Psoas muscle (tissue), 8 donors: ENCODE measurements at regions of chr9 and their contacts with region 1.

Region 1: DNA sequence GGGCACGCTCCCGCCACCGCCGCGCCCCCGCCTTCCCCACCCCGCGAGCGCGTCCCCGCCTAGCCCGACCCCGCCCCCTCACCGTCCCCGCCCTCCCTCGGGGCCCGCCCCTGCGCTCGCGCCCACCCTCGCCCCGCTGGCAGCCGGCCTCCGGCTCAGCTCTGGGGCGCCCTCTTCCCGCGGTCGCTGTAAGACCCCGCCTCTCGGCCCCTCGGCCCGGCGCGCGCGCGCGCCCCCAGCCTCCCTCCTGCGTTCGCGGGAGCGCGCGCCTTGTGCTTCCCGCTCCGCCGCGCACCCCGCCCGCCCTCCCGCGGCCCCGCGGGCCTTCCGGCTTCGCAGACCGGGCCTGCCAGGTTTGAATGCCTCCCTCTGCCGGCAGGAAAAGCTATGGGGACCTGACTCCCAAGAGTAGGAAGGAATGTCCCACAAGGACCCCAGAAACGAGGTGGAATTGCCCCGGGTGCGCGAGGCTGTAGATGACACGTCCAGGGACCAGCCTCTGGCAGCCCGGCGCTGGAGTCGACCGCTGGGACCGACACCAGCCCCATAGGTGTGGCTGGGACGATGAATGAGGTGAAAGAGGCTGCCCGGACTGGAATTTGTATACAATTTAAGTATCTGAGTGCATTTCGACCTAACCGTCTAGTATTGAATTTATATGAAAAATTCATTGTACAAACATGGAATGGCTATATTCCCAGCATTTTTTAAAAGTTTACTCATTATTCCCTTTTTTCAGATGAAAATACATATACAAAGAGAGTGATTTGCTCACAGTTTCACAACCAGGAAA is 416 bp upstream of the PTBP3 start:
- DNase-seq: peak; percentile 96 to 97
- ATAC-seq: peak; percentile 92 to 96 (median 93)
- H3K4me3 ChIP-seq: peak overlapping the region; percentile 76
- H3K27ac ChIP-seq: peak overlapping the region; percentile 94
- H3K4me1 ChIP-seq: peaks cover 21% of the 10 kb centered on the region
- H3K27me3 ChIP-seq: no peaks in the 10 kb centered on the region
- CTCF ChIP-seq: peak; percentile 61

Region 2: DNA sequence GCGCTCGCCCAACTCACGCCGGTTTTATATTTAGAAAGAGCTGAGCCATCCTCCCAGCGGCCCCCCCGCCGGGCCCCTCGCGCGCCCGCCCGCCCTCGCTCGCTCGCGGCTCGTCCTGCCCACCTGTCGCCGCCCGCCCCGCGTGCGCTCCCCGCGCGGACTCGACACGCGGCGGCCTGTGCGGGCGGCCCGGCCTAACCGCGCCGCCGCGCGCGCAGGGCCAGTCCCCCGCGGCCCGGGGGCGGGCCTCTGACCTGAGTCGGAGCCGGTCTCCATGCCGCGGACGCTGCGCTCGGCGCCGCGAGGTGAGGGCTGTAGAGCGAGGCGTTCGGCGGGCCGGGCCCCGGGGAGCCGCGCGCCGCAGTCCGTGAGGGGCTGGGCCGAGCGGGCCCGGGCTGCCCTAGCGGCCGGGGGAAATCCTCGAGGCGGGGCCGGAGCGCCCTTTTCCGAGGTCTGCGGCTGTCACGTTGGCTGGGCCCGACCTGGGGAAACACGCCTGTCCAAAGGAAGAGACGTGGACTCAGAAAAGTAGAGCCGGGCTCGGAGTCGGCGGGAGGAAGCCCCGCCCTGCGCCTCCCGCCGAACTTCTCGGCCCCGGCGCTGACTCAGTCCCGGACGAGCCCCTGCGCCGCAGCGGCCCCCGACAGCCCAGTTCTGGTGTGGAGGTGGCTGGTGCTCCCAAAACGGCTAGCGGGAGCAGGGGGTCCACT is 849.8 kb before region 1 on chr9 and contains the start of gene ECPAS:
- intact Hi-C with region 1: loop called in 1 of 2 experiments (anchors 10 kb)
- DNase-seq: peak; percentile 81 to 91
- ATAC-seq: peak; percentile 68 to 73 (median 72)
- H3K4me3 ChIP-seq: peak within 1 kb of the TSS; percentile 98
- H3K27ac ChIP-seq: peak within 1 kb of the TSS; percentile 100
- H3K4me1 ChIP-seq: peaks cover 25% of the 10 kb centered on the region
- H3K27me3 ChIP-seq: no peaks in the 10 kb centered on the region
- CTCF ChIP-seq: no peak
- total RNA-seq, gene ECPAS: 273 to 456 (median 349) TPM

Region 3: DNA sequence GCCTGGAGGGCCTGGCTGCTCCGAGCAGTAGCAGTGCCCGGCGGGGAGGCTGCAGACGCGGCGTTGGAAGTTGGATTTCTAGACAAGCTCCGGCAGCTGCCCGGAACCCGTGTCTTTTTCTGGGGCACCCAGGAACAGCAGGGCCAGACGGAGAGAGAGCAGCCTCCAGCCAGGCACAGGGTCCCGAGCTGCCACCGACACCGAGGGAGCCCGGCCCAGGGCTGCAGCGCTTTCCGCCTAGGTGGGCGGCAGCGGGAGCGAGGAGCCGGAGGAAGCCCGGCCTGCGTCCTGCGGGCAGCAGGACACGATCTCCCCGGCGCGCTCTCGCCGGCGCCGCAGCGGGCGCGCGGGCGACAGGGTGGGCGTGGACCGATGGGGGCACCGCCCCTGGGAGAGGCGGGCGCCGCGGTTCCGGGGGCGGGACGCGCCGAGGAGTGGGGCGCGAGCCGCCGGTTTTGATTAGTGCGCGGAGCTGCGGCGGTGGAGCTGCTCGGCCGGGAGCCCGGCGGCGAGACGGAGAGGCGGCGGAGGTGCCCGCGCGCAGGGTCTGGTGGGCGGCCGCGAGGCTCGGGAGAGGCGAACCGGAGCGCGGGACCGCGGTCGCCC is 437.4 kb before region 1 on chr9 and contains the start of gene UGCG:
- intact Hi-C with region 1: loop called (anchors 5 to 10 kb)
- DNase-seq: peak; percentile 89 to 93
- ATAC-seq: peak; percentile 97 to 98 (median 98)
- H3K4me3 ChIP-seq: peak within 1 kb of the TSS; percentile 95
- H3K27ac ChIP-seq: peak within 1 kb of the TSS; percentile 92
- H3K4me1 ChIP-seq: peaks cover 39% of the 10 kb centered on the region
- H3K27me3 ChIP-seq: no peaks in the 10 kb centered on the region
- CTCF ChIP-seq: no peak
- total RNA-seq, gene UGCG: 9.6 to 56.2 (median 20.2) TPM

Region 4: DNA sequence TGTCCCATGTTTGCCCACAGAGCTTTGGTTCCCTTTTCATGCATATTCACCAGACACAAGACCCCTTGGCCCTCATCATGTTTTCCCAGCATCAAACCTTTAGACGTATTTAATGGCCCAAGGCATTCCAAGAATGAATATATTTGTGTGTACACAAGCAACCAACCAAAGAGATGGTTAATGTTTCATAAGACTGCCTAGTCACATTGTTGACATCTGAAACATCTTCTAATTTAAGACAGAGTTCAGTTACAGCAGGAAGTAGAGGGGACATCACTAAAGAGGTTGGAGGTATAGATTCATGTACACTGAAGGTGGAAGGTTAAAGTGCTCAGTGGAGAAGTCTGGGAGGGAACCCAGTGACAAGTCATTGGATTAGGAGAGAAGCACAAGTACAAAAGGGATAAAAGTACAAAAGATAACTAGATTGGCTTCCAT is 207.9 kb before region 1 on chr9:
- intact Hi-C with region 1: no loop called
- DNase-seq: no peak
- ATAC-seq: no peak
- H3K4me3 ChIP-seq: no peak overlapping the region
- H3K27ac ChIP-seq: no peak overlapping the region
- H3K4me1 ChIP-seq: no peaks in the 10 kb centered on the region
- H3K27me3 ChIP-seq: no peaks in the 10 kb centered on the region
- CTCF ChIP-seq: no peak

Region 5: DNA sequence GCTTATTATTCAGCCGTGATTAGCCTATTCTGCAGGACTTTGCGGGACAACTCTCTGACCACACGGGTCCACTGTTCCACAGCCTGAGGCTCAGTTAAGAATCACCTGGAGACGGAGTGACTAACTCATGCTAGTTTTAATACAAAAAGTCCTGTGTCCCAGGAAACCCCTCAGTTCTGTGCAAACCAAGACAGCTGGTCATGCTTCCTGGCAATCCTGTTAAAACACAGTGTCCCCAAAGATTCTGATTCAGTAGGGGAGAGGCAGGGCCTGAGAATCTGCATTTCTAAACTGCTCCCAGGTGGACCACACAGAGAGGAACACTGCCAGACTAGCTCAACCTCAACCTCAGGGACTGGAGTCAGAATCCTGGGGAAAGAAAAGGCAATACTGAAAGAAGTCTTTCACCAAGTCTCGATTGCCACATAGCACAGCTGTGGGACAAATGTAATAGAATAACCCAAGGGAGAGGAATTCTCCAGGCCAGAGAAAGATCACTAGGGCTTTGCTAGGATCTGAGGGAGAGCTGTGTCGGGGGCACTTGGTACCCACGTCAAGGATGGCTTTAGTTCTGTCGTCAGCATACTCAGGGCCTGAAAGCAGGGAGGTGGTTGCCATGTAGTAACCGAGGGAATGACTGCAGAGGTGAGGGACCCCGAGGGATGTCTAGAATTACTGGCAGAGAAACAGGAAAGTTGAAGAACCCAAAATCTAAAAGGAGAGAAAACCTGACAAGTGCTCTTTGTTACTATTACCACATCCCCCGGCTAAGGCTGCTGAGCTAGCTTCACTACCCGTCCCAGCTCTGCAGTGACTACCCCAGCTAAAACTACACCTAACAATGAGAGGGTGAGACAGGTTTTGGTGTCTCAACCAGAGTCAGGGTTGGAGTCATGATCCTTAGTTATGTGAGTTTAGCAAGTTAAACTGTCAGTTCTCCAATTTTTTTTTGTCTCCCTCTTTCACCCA is 167.4 kb before region 1 on chr9:
- intact Hi-C with region 1: loop called in 1 of 2 experiments (anchors 10 kb)
- DNase-seq: peak in 1 of 2 donors; percentile 70
- ATAC-seq: peak; percentile 49 to 84 (median 78)
- H3K4me3 ChIP-seq: no peak overlapping the region
- H3K27ac ChIP-seq: no peak overlapping the region
- H3K4me1 ChIP-seq: peaks cover 5% of the 10 kb centered on the region
- H3K27me3 ChIP-seq: no peaks in the 10 kb centered on the region
- CTCF ChIP-seq: no peak